Activated B cell treated with CpG ODN at 0.5 μM for 24 hours (primary cell): ENCODE measurements at regions of chr2 and their contacts with region 1.

Region 1: DNA sequence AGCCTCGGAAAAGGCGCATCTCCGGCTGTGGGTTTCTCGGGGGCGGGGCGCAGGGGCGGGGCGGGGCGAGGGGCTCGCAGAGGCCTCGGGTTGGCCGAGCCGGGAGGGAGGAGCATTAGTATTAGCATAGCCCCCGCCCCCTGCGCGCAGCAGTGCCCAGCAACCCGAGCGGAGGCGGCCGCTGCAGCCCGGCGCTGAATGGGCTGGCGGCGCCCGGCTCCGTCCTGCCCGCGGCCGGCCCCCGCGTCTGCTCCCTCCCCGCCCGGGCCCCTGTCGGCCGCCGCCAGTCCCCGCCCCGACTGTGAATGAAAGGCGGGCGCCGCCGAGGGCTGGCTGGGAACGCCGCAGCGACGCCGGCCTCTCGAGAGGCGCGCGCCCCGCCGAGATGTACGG is at the start of gene EFR3B:
- DNase-seq: peak; percentile 84
- ATAC-seq: peak; percentile 99
- H3K4me3 Mint-ChIP-seq: peak within 1 kb of the TSS; percentile 84
- H3K27ac Mint-ChIP-seq: no peak within 1 kb of the TSS
- H3K4me1 Mint-ChIP-seq: peaks cover 27% of the 10 kb centered on the region
- H3K27me3 Mint-ChIP-seq: peaks cover 42% of the 10 kb centered on the region
- CTCF ChIP-seq: no peak
- total RNA-seq, gene EFR3B: 0.07 and 0.10 TPM in 2 replicates

Region 2: GRCh38 chr2:24739354-24740025 is 302.4 kb before region 1 on chr2:
- CTCF ChIA-PET with region 1: no interaction called
- POLR2A ChIA-PET with region 1: no interaction called
- intact Hi-C with region 1: no loop called
- DNase-seq: no peak
- ATAC-seq: no peak
- H3K4me3 Mint-ChIP-seq: no peak overlapping the region
- H3K27ac Mint-ChIP-seq: no peak overlapping the region
- H3K4me1 Mint-ChIP-seq: no peaks in the 10 kb centered on the region
- H3K27me3 Mint-ChIP-seq: no peaks in the 10 kb centered on the region
- CTCF ChIP-seq: no peak

Region 3: DNA sequence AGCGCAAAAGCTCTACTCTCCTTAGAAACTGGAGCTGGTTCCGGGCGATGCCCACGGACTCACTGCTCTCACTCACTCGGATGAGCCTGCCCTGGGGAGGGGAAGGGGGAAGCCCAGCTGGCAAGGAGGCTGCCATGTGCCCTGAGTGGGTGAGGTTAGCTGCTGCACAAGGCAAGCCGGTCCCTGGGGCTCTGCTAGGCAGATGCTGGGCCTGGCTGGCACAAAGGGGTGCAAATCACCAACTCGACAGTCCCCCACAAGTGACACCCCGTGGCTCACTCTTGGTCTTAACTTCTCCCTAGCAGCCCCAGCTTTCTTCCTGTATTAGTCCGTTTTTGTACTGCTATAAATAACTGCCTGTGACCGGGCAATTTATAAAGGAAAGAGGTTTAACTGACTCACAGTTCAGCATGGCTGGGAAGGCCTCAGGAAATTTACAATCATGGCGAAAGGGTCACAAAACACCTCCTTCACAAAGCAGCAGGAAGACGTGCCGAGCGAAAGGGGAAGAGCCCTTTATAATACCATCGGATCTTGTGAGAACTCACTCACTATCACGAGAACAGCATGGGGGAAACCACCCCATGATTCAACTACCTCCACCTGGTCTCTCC is 155.1 kb before region 1 on chr2:
- CTCF ChIA-PET with region 1: no interaction called
- POLR2A ChIA-PET with region 1: no interaction called
- intact Hi-C with region 1: loop called (anchors 5 kb)
- DNase-seq: peak; percentile 49
- ATAC-seq: peak; percentile 93
- H3K4me3 Mint-ChIP-seq: peak overlapping the region; percentile 90
- H3K27ac Mint-ChIP-seq: peak overlapping the region; percentile 97
- H3K4me1 Mint-ChIP-seq: peaks cover 61% of the 10 kb centered on the region
- H3K27me3 Mint-ChIP-seq: no peaks in the 10 kb centered on the region
- CTCF ChIP-seq: no peak

Region 4: DNA sequence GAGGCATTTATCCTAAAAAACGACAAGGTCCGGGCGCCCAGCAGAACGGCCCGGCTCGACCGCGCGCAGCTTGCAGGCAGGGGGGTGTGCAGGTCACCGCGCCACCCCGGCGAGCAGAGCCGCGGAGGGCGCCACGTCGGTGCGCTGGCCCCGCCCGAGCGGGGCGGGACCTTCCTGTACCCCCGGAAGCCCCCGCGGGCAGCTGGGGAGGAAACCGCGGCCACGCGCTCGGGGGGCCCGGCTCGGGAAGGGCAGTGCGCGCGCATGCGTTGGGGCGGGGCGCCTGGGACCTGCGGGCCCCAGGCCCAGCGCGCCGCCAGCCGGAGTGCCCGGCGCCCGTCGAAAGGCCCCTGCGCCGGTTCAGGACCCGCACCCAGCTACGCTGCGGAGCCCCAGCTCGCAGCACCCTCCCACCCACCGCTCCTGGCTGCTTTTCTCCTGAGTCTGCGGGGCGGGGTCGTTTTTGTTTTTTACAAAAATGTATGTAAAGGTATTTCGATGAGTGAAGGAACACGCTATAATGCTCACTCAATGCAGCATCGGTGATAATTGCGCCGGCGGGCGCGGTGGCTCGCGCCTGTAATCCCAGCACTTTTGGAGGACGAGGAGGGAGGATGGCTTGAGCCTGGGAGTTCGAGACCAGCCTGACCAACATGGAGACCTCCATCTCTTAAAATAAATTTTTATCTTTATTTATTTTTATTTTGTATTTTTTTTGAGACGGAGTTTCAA is 174.2 kb after region 1 on chr2:
- CTCF ChIA-PET with region 1: no interaction called
- POLR2A ChIA-PET with region 1: no interaction called
- intact Hi-C with region 1: loop called (anchors 5 kb)
- DNase-seq: peak; percentile 85
- ATAC-seq: peak; percentile 94
- H3K4me3 Mint-ChIP-seq: peak overlapping the region; percentile 72
- H3K27ac Mint-ChIP-seq: peak overlapping the region; percentile 32
- H3K4me1 Mint-ChIP-seq: peaks cover 21% of the 10 kb centered on the region
- H3K27me3 Mint-ChIP-seq: no peaks in the 10 kb centered on the region
- CTCF ChIP-seq: no peak